Left ventricle myocardium superior (tissue), 1 donor: ENCODE measurements at regions of chr5 and their contacts with region 1.

Region 1: DNA sequence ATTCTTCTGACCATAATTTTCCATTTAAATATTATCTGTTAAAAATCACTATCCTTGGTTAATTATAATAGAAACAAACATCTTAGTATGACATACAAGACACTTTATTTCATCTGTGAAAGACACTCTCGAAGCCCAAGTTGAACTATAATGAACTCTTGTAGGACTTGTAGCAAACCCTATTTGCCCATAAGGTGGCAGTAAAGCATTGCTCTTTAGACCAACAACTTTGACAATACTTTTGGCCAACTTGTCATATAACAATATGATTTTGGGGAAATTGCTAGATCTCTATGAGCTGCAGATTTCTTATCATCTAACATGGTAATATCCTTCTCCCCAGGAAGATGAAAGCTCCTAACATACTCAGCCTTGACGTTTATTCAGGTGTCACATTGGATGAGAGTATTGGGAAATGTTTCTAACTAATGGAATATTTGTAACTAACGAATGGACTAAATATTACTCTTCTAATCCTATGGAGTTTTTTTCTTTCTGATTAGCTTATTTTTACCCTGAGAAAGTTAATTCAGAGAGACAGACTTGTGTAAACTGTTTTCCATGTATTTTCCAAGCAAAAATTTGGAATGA is 11.0 kb downstream of the SPINK14 start:
- DNase-seq: no peak
- ATAC-seq: peak; percentile 51

Region 2: GRCh38 chr5:147558826-147559225 is 620.5 kb before region 1 on chr5:
- intact Hi-C with region 1: no loop called
- DNase-seq: peak; percentile 51
- ATAC-seq: peak; percentile 77

Region 3: DNA sequence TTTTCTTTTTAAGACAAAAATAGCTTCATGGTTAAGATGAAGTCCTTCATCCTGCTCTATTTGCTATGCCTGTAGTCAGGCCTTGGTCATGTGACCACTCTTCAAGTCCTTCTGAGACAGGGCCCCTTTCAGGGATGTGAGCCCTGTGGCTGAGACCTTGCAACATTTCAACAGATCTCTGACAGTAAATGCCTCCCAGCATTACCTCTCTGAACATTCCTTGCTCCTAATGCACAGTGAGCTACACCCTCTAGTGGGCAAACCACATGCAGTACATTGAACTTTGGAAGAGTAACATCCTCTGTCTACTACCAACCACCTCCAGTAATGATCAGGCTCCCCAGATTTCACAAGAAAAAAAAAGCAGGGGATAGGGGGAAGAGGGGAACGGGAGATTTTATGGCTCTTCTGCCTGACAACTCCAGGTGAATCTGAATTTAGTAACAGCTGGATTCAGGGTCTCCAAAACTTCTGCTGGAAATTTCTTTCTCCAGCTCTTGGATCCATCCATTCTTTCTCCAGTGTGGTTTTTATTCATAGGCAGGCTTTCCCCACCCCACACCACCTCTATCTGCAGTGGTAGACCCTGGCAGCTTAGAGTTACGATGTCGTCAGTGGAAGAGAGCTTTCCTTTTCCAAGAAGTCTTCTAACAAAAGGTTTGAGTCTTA is 195.5 kb after region 1 on chr5:
- intact Hi-C with region 1: loop called (anchors 5 kb)
- DNase-seq: no peak
- ATAC-seq: peak; percentile 64

Region 4: GRCh38 chr5:148443998-148444397 is 264.7 kb after region 1 on chr5:
- intact Hi-C with region 1: loop called (anchors 5 kb)
- DNase-seq: no peak
- ATAC-seq: peak; percentile 81

Region 5: DNA sequence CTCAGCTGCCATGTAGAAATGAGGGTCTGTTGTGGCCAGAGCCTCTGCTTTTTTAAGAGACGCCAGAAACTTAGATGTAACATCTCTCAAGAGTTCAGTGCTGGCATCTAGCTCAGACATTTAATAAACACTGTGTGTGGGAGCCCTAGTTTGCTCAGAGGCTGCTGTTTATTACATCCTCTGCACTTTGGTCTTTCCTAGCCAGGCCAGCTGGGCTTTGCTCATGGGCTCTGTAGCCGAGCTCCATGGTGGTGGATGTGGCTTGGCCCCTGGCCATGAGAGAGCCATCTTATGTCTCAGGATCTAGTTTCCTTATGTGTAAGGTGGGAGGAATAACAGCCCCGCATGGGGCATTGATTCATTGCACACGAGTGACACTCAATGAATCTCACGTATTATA is 1432.0 kb after region 1 on chr5:
- intact Hi-C with region 1: no loop called
- DNase-seq: peak; percentile 49
- ATAC-seq: peak; percentile 43